ENCODE measurements at regions of chr15 and their contacts with region 1.

Region 1: DNA sequence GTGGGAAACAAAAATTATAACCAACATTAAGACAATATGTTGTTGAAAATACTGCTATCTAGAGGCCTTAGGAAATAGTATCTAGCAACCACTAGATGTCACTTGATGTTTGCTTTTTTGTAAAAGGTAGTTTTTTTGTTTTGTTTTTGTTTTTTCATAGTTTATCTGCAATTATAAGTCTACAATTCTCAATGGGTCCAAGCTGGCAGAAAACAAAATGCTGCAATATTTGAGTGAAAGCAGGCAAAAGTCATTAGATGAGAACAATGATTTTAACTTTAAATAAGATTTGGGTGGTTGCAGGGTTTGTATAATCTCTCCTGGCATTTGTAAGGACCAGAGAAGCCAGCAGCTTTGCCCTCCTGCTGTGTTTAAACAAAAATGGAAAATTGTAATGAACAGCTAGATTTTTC is 27.0 kb downstream of the DUT start:
- DNase-seq: no peak
- H3K4me3 ChIP-seq: no peak overlapping the region
- H3K27ac ChIP-seq: no peak overlapping the region
- H3K4me1 ChIP-seq: peaks cover 9% of the 10 kb centered on the region
- H3K27me3 ChIP-seq: no peaks in the 10 kb centered on the region
- CTCF ChIP-seq: peak; percentile 49 to 62

Region 2: GRCh38 chr15:48472753-48473152 is 114.5 kb after region 1 on chr15:
- CTCF ChIA-PET with region 1: no interaction called
- dilution Hi-C with region 1: no loop called
- in situ Hi-C with region 1: no loop called
- intact Hi-C with region 1: no loop called
- DNase-seq: peak; percentile 56
- H3K4me3 ChIP-seq: no peak overlapping the region
- H3K27ac ChIP-seq: no peak overlapping the region
- H3K4me1 ChIP-seq: peaks cover 6% of the 10 kb centered on the region
- H3K27me3 ChIP-seq: no peaks in the 10 kb centered on the region
- CTCF ChIP-seq: no peak

Region 3: GRCh38 chr15:48507416-48508065 is 149.3 kb after region 1 on chr15:
- CTCF ChIA-PET with region 1: no interaction called
- dilution Hi-C with region 1: no loop called
- in situ Hi-C with region 1: no loop called
- intact Hi-C with region 1: loop called (anchors 1 kb)
- DNase-seq: peak; percentile 37
- H3K4me3 ChIP-seq: no peak overlapping the region
- H3K27ac ChIP-seq: no peak overlapping the region
- H3K4me1 ChIP-seq: no peaks in the 10 kb centered on the region
- H3K27me3 ChIP-seq: no peaks in the 10 kb centered on the region
- CTCF ChIP-seq: peak; percentile 76 to 79

Region 4: DNA sequence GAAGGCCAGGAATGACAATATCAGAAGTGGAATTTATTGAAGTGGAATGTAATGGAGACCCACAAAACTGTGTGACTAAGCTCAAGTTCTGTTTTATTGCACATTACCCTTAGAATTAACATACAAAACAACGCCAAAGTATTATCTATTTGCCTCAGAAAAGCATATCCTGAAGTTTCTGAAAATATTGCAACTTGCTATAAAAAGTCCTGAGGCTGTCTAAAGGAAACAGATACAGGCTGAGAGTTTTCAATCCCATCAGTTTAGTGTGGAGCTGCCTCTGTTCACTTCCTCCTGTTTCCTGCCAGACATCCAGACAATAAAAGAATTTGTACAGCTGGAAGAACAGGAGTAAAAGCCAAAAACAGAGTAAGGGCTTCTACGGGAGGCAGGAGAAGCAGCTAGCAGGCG is 178.5 kb after region 1 on chr15:
- CTCF ChIA-PET with region 1: interaction called, 14 read pairs
- dilution Hi-C with region 1: no loop called
- in situ Hi-C with region 1: no loop called
- intact Hi-C with region 1: no loop called
- DNase-seq: no peak
- H3K4me3 ChIP-seq: no peak overlapping the region
- H3K27ac ChIP-seq: no peak overlapping the region
- H3K4me1 ChIP-seq: peaks cover under 1% of the 10 kb centered on the region
- H3K27me3 ChIP-seq: no peaks in the 10 kb centered on the region
- CTCF ChIP-seq: no peak

Region 5: GRCh38 chr15:48800811-48801455 is 442.7 kb after region 1 on chr15:
- CTCF ChIA-PET with region 1: no interaction called
- dilution Hi-C with region 1: no loop called
- in situ Hi-C with region 1: loop called (anchors 25 kb)
- intact Hi-C with region 1: loop called (anchors 1 kb)
- DNase-seq: peak; percentile 7
- H3K4me3 ChIP-seq: no peak overlapping the region
- H3K27ac ChIP-seq: no peak overlapping the region
- H3K4me1 ChIP-seq: peaks cover 7% of the 10 kb centered on the region
- H3K27me3 ChIP-seq: no peaks in the 10 kb centered on the region
- CTCF ChIP-seq: peak; percentile 36 to 46

Region 6: GRCh38 chr15:48855501-48856440 is 497.5 kb after region 1 on chr15:
- CTCF ChIA-PET with region 1: no interaction called
- dilution Hi-C with region 1: no loop called
- in situ Hi-C with region 1: loop called in 1 of 2 experiments (anchors 10 kb)
- intact Hi-C with region 1: loop called (anchors 1 kb)
- DNase-seq: no peak
- H3K4me3 ChIP-seq: no peak overlapping the region
- H3K27ac ChIP-seq: no peak overlapping the region
- H3K4me1 ChIP-seq: peaks cover 5% of the 10 kb centered on the region
- H3K27me3 ChIP-seq: no peaks in the 10 kb centered on the region
- CTCF ChIP-seq: peak; percentile 47 to 70

Measured in mammary epithelial cell (primary cell).